ENCODE measurements at regions of chr9 and their contacts with region 1.

Region 1: GRCh38 chr9:119968836-119969707 is 599.8 kb upstream of the BRINP1 start:
- DNase-seq: peak; percentile 28
- ATAC-seq: peak; percentile 99
- H3K4me3 ChIP-seq: no peak overlapping the region
- H3K27ac ChIP-seq: no peak overlapping the region
- H3K4me1 ChIP-seq: peaks cover 13% of the 10 kb centered on the region
- H3K27me3 ChIP-seq: no peaks in the 10 kb centered on the region
- CTCF ChIP-seq: peak; percentile 87
- EP300 ChIP-seq: no peak
- POLR2A ChIP-seq: no peak
- RAD21 ChIP-seq: no peak

Region 2: GRCh38 chr9:119556129-119556875 is 412.8 kb before region 1 on chr9:
- CTCF ChIA-PET with region 1: no interaction called
- POLR2A ChIA-PET with region 1: no interaction called
- in situ Hi-C with region 1: no loop called
- intact Hi-C with region 1: loop called (anchors 1 kb)
- DNase-seq: peak; percentile 27
- ATAC-seq: peak; percentile 99
- H3K4me3 ChIP-seq: peak overlapping the region in 1 of 3 experiments; percentile 36; a peak in 1 of 6 replicates
- H3K27ac ChIP-seq: no peak overlapping the region
- H3K4me1 ChIP-seq: no peaks in the 10 kb centered on the region
- H3K27me3 ChIP-seq: no peaks in the 10 kb centered on the region; a peak in 1 of 5 replicates
- CTCF ChIP-seq: peak; percentile 94
- EP300 ChIP-seq: no peak
- POLR2A ChIP-seq: no peak
- RAD21 ChIP-seq: peak; percentile 79

Region 3: GRCh38 chr9:119998614-119999013 is 29.5 kb after region 1 on chr9:
- CTCF ChIA-PET with region 1: no interaction called
- POLR2A ChIA-PET with region 1: no interaction called
- in situ Hi-C with region 1: no loop called
- intact Hi-C with region 1: no loop called
- DNase-seq: no peak
- ATAC-seq: no peak
- H3K4me3 ChIP-seq: no peak overlapping the region
- H3K27ac ChIP-seq: no peak overlapping the region
- H3K4me1 ChIP-seq: no peaks in the 10 kb centered on the region
- H3K27me3 ChIP-seq: no peaks in the 10 kb centered on the region; a peak in 1 of 5 replicates
- CTCF ChIP-seq: no peak
- EP300 ChIP-seq: no peak
- POLR2A ChIP-seq: no peak
- RAD21 ChIP-seq: no peak

Measured in HepG2 (cell line).